ENCODE measurements at regions of chr11 and their contacts with region 1.

Region 1: GRCh38 chr11:125164422-125165110 is at the start of gene PKNOX2:
- DNase-seq: peak; percentile 65
- H3K4me3 ChIP-seq: peak within 1 kb of the TSS; percentile 53 to 69 (median 63)
- H3K27ac ChIP-seq: no peak within 1 kb of the TSS
- H3K4me1 ChIP-seq: peaks cover 16% of the 10 kb centered on the region
- H3K27me3 ChIP-seq: peaks cover 32 to 35% of the 10 kb centered on the region in 2 experiments
- CTCF ChIP-seq: peak; percentile 36 to 82
- POLR2A ChIP-seq: no peak
- total RNA-seq, gene PKNOX2: 0.11 and 0.14 TPM in 2 replicates

Region 2: DNA sequence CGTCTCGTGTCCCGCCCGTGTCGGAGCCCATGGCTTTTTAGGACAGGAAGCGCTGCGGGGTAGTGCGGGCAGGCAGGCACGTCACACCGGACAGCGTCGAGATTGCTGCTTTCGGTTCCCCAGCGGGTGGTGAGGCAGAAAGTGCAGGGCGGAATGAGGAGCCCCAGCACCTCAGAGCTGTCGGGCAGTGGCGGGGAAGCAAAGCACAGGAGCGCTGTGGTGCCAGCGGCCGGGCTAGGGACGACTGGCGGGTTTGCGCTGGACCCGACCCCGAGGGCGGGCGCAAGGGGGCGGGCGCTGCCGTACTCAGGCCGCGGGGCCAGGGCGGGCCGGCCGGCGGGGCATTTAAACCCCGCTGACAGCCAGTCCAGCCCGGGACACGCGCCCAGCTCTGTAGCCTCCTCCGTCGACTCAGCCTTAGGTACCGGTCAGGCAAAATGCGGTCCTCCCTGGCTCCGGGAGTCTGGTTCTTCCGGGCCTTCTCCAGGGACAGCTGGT is 101.6 kb before region 1 on chr11 and contains the start of gene SLC37A2:
- CTCF ChIA-PET with region 1: no interaction called
- POLR2A ChIA-PET with region 1: no interaction called
- dilution Hi-C with region 1: no loop called
- intact Hi-C with region 1: loop called (anchors 1 kb)
- DNase-seq: peak; percentile 64
- H3K4me3 ChIP-seq: peak within 1 kb of the TSS; percentile 64 to 87 (median 74)
- H3K27ac ChIP-seq: no peak within 1 kb of the TSS
- H3K4me1 ChIP-seq: peaks cover 9% of the 10 kb centered on the region
- H3K27me3 ChIP-seq: no peaks in the 10 kb centered on the region
- CTCF ChIP-seq: peak; percentile 7 to 12
- POLR2A ChIP-seq: no peak
- total RNA-seq, gene SLC37A2: 1.1 and 1.3 TPM in 2 replicates

Region 3: DNA sequence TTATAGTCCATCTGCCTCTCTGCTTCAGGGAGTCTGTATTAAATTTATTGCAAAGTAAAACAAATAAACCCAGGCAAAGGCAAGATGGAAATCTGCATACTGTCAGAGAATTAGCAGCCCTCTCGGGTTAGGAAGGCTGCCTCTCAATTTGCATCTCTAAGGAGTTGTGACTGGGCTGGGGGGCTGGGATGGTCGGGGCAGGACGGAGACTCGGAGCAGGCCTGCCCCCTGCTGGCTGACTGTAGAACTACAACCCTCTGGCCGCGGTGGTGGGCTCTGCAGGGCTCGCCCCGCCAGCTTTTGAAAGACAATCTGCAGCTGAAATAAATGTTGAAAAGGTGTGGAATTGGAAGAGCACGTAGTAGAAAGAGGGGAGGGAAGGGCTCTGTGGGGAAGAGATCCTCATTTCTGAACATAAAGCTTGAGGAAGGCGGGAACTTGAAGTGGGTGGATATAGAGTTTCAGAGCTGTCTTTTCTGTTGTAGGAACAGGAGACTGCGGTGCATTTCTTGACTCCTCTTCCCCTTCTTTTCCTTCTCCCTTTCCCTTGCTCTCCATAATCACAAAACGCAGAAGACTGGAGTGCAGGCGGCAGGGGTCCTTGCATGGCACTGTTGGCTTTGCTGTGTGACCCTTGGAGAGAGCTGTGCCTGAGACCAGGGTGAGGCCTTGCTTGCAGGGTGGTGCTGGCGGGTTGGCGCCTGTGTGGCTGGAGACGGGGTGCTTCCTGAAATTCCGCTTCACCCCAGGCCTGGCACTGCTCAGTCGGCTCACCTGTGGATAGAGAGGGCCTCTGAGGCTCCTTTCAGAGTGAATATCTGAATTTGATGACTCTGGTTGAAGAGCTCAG is 22.7 kb before region 1 on chr11:
- CTCF ChIA-PET with region 1: interaction called, 18 read pairs
- POLR2A ChIA-PET with region 1: no interaction called
- dilution Hi-C with region 1: no loop called
- intact Hi-C with region 1: no loop called
- DNase-seq: peak; percentile 52
- H3K4me3 ChIP-seq: no peak overlapping the region
- H3K27ac ChIP-seq: no peak overlapping the region
- H3K4me1 ChIP-seq: no peaks in the 10 kb centered on the region
- H3K27me3 ChIP-seq: peaks cover 0 to 10% of the 10 kb centered on the region in 2 experiments
- CTCF ChIP-seq: peak; percentile 90 to 95
- POLR2A ChIP-seq: no peak

Region 4: DNA sequence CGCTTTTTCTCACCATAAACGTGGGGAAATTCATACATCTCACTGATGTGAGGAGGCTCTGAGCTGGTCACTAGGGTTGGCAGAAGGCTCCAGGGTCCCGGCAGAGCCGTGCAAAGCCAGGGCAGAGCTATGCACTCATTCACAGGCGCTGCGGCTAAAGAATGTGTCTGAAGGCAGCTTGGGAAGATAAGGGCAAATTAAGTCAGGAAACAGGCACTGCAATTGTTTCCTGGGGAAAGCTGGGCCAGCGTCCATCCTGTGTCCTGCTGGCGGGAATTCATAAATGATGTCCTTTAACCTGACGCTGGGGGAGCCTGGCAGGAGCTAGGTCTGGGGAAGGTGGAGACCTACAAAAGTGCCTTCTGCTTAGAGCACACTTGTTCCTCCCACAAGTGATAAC is 27.6 kb after region 1 on chr11:
- CTCF ChIA-PET with region 1: interaction called, 17 read pairs
- POLR2A ChIA-PET with region 1: no interaction called
- dilution Hi-C with region 1: no loop called
- intact Hi-C with region 1: no loop called
- DNase-seq: peak; percentile 87
- H3K4me3 ChIP-seq: no peak overlapping the region
- H3K27ac ChIP-seq: no peak overlapping the region
- H3K4me1 ChIP-seq: peaks cover 8% of the 10 kb centered on the region
- H3K27me3 ChIP-seq: peaks cover 4 to 8% of the 10 kb centered on the region in 2 experiments
- CTCF ChIP-seq: peak in 1 of 2 donors; percentile 32
- POLR2A ChIP-seq: peak; percentile 40

Region 5: GRCh38 chr11:125300791-125301218 is 136.2 kb after region 1 on chr11:
- CTCF ChIA-PET with region 1: interaction called, 11 read pairs
- POLR2A ChIA-PET with region 1: no interaction called
- dilution Hi-C with region 1: no loop called
- intact Hi-C with region 1: no loop called
- DNase-seq: peak; percentile 80
- H3K4me3 ChIP-seq: no peak overlapping the region
- H3K27ac ChIP-seq: peak overlapping the region; percentile 68
- H3K4me1 ChIP-seq: peaks cover 42% of the 10 kb centered on the region
- H3K27me3 ChIP-seq: no peaks in the 10 kb centered on the region
- CTCF ChIP-seq: no peak
- POLR2A ChIP-seq: peak; percentile 31

Region 6: DNA sequence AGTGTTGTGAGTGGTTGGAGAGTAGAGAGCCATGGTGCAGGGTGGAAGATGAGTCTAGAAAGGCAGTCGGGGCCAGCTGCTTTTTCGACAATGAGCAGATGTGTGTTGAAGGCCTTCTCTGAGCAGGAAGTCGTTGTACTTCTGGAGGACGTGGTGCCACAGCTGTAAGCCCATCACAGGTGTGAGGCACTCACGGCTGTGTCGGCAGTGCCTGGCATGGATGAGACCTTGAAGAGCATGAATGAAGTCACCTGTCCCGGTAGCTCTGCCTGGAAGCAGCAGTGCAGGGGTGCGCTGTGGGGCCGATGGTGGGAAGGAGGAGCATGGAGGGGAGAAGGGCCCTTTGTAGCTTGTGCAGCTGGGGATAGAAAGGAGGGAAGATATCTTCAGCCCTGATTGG is 165.2 kb after region 1 on chr11:
- CTCF ChIA-PET with region 1: no interaction called
- POLR2A ChIA-PET with region 1: no interaction called
- dilution Hi-C with region 1: no loop called
- intact Hi-C with region 1: no loop called
- DNase-seq: no peak
- H3K4me3 ChIP-seq: no peak overlapping the region
- H3K27ac ChIP-seq: no peak overlapping the region
- H3K4me1 ChIP-seq: no peaks in the 10 kb centered on the region
- H3K27me3 ChIP-seq: peaks cover 3 to 27% of the 10 kb centered on the region in 2 experiments
- CTCF ChIP-seq: no peak
- POLR2A ChIP-seq: no peak

Region 7: DNA sequence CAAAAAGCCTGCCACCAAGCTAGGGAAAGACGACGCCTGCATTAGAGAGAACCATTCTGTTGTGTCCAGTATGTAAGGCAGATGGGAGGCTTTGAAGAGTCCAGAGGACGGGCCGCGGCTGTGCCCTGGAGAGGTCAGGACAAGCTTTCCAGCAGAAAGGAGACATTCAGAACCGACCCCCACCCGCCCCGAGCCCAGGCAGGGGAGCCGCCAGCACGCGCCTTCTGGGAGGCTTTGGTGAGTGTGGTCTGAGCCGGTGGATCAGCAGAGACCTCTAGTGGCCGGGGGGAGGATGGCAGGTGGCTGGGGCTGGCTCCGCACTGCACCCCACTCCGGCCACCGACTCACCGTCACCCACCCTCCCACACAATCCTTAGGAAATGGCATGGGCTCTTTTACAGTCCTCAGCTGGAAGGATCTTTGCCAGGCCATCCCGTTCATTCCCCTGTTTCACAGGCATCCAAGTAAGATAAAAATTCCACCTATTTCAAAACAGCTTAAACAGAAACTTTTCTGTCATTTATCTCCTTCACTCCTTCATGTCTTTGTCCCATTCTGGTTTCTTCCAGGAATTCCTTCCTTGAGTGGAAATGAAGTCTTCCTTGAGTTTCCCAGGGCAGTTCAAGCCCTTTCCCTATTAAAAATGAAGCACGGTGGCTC is 240.3 kb after region 1 on chr11:
- CTCF ChIA-PET with region 1: interaction called, 16 read pairs
- POLR2A ChIA-PET with region 1: no interaction called
- dilution Hi-C with region 1: no loop called
- intact Hi-C with region 1: loop called (anchors 2 kb)
- DNase-seq: peak; percentile 47
- H3K4me3 ChIP-seq: no peak overlapping the region
- H3K27ac ChIP-seq: no peak overlapping the region
- H3K4me1 ChIP-seq: peaks cover 4% of the 10 kb centered on the region
- H3K27me3 ChIP-seq: peaks cover 9 to 12% of the 10 kb centered on the region in 2 experiments
- CTCF ChIP-seq: peak; percentile 79 to 99
- POLR2A ChIP-seq: no peak